OCI-LY7 (cell line): ENCODE measurements at regions of chr7 and their contacts with region 1.

Region 1: DNA sequence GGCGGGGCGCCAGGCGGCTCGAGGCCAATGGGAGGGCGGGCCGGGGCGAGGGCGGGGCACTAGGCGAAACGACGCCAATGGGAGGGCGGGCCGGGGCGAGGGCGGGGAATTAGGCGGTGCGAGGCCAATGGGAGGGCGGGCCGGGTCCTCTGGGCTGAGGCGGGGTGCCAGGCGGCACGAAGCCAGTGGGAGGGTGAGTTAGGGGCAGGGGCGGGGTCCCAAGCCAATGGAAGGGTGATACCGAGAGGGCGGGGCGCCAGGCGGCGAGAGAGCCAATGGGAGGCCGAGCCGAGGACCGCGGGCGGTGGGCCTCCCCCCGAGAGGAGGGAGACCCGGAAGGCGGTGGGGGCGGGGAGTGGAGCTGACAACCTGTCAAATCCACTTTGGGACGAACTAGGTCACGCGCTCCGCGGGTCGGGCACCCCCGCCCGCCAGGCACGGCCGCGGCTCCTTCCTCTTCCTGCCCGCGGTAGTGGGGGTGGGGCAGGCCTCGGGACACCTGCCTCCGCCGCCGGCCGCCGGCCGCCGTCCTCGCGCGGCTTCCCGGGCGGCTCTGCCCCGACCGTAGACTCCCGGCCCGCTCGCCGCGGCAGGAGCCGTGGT is 28.0 kb upstream of the KMT2C start:
- DNase-seq: peak; percentile 100
- H3K4me3 ChIP-seq: peak overlapping the region; percentile 88
- H3K27ac ChIP-seq: peak overlapping the region; percentile 80
- H3K4me1 ChIP-seq: peaks cover 14% of the 10 kb centered on the region
- CTCF ChIP-seq: no peak

Region 2: DNA sequence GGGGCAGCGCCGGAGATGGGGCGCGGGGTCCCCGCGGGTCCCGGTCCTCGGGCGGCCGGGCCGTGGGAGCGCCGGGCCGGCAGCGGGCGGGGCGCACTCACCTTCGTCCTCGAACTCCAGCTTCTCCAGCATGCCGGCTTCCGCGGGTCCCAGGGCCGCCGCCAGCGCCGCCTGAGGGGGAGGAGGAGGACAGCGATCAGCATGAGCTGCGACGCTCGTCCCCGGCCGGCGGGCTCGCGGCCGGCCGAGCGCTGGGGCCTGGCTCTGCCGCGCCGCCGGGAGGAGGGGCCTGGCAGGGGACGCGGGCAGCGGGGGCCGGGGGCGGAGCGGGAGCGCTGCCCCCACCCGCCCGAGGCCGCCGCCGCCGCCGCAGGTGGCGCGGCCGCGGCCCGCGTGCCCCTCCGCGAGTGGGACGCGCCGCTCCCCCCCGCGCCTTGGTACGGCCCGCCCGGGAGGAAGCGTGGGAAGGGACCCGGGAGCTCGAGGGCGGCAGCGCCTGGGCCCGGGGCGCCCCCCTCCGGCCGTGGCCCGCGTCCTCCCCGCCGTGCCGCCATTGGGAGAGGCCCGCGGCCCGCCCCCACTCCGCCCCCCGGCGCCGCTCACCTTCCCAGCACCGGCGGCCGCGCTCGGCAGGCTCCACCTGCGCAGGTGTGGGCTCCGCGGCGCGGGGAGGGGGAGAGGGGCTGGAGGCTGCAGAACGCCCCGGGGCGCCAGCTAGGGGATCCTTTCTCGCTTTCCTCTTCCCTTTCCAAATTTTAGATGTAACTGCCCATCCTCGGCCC is 831.7 kb before region 1 on chr7:
- CTCF ChIA-PET with region 1: no interaction called
- POLR2A ChIA-PET with region 1: no interaction called
- intact Hi-C with region 1: loop called (anchors 10 kb)
- DNase-seq: peak; percentile 86
- H3K4me3 ChIP-seq: peak overlapping the region; percentile 68
- H3K27ac ChIP-seq: no peak overlapping the region
- H3K4me1 ChIP-seq: peaks cover 16% of the 10 kb centered on the region
- CTCF ChIP-seq: peak; percentile 52; the same call in 1 of the 2 replicates

Region 3: GRCh38 chr7:152158801-152159587 is 304.8 kb before region 1 on chr7:
- CTCF ChIA-PET with region 1: no interaction called
- POLR2A ChIA-PET with region 1: no interaction called
- intact Hi-C with region 1: loop called (anchors 2 kb)
- DNase-seq: peak; percentile 93
- H3K4me3 ChIP-seq: peak overlapping the region; percentile 51
- H3K27ac ChIP-seq: peak overlapping the region; percentile 92
- H3K4me1 ChIP-seq: peaks cover 51% of the 10 kb centered on the region
- CTCF ChIP-seq: no peak

Region 4: DNA sequence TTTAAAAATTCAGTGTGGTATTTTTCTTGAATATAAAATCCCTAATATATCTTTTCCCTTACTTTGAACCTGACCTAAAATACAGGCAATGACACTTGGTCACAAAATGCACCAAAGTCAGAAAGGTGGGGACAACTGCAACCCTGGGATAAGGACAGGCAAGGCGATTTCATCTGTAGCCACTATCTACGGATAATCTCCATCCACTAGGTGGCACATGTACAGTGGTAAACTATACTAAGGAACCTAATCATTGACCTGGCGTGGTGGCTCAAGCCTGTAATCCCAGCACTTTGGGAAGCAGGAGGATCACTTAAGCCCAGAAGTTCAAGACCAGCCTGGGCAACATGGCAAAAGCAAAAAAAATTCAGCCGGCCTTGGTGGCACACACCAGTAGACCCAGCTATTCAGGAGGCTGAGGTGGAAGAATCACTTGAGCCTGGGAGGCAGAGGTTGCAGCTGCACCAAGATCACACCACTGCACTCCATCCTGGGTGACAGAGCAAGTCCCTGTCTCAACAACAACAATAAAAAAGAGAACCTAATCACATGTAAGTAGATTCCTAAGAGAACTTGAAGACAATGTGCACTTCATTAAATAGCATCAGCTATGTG is 126.9 kb before region 1 on chr7:
- CTCF ChIA-PET with region 1: no interaction called
- POLR2A ChIA-PET with region 1: interaction called, 5 read pairs
- intact Hi-C with region 1: loop called (anchors 1 kb)
- DNase-seq: peak; percentile 70
- H3K4me3 ChIP-seq: no peak overlapping the region
- H3K27ac ChIP-seq: peak overlapping the region; percentile 51
- H3K4me1 ChIP-seq: peaks cover 81% of the 10 kb centered on the region
- CTCF ChIP-seq: peak; percentile 91

Region 5: GRCh38 chr7:152341914-152342236 is 121.9 kb before region 1 on chr7:
- CTCF ChIA-PET with region 1: interaction called, 3 read pairs
- POLR2A ChIA-PET with region 1: interaction called, 6 read pairs
- intact Hi-C with region 1: loop called (anchors 1 kb)
- DNase-seq: peak; percentile 48
- H3K4me3 ChIP-seq: peak overlapping the region; percentile 65
- H3K27ac ChIP-seq: peak overlapping the region; percentile 95
- H3K4me1 ChIP-seq: peaks cover 77% of the 10 kb centered on the region
- CTCF ChIP-seq: no peak

Region 6: GRCh38 chr7:152436111-152436930 is 27.5 kb before region 1 on chr7:
- CTCF ChIA-PET with region 1: no interaction called
- POLR2A ChIA-PET with region 1: no interaction called
- intact Hi-C with region 1: loop called (anchors 1 kb)
- DNase-seq: peak; percentile 91
- H3K4me3 ChIP-seq: peak overlapping the region; percentile 84
- H3K27ac ChIP-seq: peak overlapping the region; percentile 81
- H3K4me1 ChIP-seq: peaks cover 23% of the 10 kb centered on the region
- CTCF ChIP-seq: no peak

Region 7: GRCh38 chr7:152675759-152676636 is 212.2 kb after region 1 on chr7 and contains the start of gene XRCC2:
- CTCF ChIA-PET with region 1: no interaction called
- POLR2A ChIA-PET with region 1: interaction called, 3 read pairs
- intact Hi-C with region 1: loop called (anchors 2 kb)
- DNase-seq: peak; percentile 93
- H3K4me3 ChIP-seq: peak within 1 kb of the TSS; percentile 80
- H3K27ac ChIP-seq: peak within 1 kb of the TSS; percentile 68
- H3K4me1 ChIP-seq: peaks cover 15% of the 10 kb centered on the region
- CTCF ChIP-seq: no peak
- total RNA-seq, gene XRCC2: 39.7 and 40.0 TPM in 2 replicates